Activated CD4-positive, alpha-beta T cell treated with anti-CD3 and anti-CD28 coated beads for 36 hours (primary cell): ENCODE measurements at regions of chr7 and their contacts with region 1.

Region 1: DNA sequence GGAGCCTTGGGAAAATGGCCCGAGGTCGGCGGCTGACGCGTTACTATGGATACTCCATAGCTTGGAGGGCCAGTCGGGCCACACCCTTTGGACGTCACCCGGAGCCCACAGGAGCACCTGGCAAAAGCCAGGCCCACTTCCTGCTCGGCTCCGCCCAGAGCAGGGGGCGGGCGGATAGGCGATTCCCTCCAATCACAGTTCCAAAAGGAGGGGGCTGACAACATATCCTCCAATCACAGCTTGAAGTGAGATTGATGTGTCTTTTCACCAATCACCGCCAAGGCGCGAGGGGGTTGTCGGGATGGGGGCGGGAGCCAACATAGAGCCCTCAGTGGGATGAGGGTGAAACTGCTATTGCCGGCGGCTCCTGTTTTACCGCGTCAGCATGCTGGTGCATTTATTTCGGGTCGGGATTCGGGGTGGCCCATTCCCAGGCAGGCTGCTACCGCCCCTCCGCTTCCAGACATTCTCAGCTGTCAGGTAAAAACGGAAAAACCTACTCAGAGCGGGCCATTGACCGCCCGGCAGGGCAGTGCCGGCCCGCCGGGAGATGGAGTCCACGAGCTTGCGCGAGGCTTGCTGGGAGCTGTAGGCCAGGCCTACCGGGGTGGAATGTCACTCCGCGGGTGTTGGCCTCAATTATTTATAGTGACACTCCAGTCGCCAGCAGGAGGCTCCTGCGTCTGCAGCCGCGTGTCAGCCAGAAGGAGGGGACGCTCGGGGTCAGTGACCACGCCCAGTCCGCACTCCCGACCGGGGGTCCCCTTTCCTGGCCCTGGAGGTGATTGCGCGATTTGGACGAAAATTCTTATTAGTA is at the start of gene ABCB8:
- DNase-seq: peak; percentile 99
- ATAC-seq: peak; percentile 95
- H3K4me3 Mint-ChIP-seq: peak within 1 kb of the TSS; percentile 97
- H3K27ac Mint-ChIP-seq: peak within 1 kb of the TSS; percentile 95
- H3K4me1 Mint-ChIP-seq: peaks cover 23% of the 10 kb centered on the region
- H3K27me3 Mint-ChIP-seq: no peaks in the 10 kb centered on the region
- total RNA-seq, gene ABCB8: 41.9 to 44.5 TPM

Region 2: GRCh38 chr7:151008511-151009323 is 19.6 kb before region 1 on chr7:
- CTCF ChIA-PET with region 1: interaction called, 13 read pairs
- POLR2A ChIA-PET with region 1: interaction called, 6 read pairs
- intact Hi-C with region 1: loop called in 1 of 2 experiments (anchors 1 kb)
- DNase-seq: peak; percentile 89
- ATAC-seq: peak; percentile 67
- H3K4me3 Mint-ChIP-seq: peak overlapping the region; percentile 55
- H3K27ac Mint-ChIP-seq: peak overlapping the region; percentile 59
- H3K4me1 Mint-ChIP-seq: peaks cover 53% of the 10 kb centered on the region
- H3K27me3 Mint-ChIP-seq: no peaks in the 10 kb centered on the region

Region 3: DNA sequence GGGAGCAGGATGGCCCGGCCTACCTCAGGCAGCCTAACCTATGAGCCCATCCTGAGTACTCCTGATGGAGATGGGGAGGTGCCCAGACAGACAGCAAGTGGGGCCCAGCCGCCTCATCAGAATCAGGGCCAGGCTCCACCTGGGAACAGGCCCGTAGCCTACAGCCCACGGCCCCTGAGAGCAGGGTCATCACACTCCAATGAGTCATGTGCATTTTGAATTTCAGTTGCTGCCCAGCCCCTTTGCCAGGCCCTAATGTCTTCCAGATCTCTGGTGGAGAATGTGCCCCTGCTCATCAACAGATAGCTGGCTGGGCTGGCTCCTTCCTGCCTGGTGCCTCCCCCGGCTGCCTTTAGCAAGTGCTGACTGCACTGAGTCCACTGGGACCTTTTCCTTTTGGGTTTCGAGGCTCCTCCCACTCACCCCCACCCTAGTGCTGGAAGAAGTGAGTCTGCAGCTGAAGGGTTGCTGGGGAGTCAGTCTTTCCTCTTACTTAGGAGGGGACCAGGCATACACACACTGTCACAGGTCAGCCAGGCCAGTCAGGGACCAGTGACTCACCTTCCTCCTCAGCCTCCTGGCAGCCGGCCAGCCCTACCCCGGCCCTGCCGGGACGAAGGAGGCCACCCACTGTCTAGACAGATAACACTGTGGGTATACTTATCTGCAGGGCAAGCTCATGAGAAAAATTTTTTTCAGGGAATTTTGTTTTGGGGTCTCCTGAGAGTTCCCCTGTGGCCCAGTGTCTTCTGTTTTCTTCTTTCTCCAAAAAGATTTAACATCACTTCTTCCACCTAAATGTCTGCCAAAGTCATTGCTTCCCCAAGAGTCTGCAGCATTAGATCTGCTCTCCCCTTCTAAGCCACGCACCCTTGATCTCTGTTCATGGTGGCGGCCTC is 10.9 kb after region 1 on chr7:
- CTCF ChIA-PET with region 1: interaction called, 4 read pairs
- POLR2A ChIA-PET with region 1: no interaction called
- intact Hi-C with region 1: loop called in 1 of 2 experiments (anchors 1 kb)
- DNase-seq: peak; percentile 88
- ATAC-seq: peak; percentile 94
- H3K4me3 Mint-ChIP-seq: peak overlapping the region; percentile 10
- H3K27ac Mint-ChIP-seq: peak overlapping the region; percentile 85
- H3K4me1 Mint-ChIP-seq: peaks cover 17% of the 10 kb centered on the region
- H3K27me3 Mint-ChIP-seq: no peaks in the 10 kb centered on the region

Region 4: DNA sequence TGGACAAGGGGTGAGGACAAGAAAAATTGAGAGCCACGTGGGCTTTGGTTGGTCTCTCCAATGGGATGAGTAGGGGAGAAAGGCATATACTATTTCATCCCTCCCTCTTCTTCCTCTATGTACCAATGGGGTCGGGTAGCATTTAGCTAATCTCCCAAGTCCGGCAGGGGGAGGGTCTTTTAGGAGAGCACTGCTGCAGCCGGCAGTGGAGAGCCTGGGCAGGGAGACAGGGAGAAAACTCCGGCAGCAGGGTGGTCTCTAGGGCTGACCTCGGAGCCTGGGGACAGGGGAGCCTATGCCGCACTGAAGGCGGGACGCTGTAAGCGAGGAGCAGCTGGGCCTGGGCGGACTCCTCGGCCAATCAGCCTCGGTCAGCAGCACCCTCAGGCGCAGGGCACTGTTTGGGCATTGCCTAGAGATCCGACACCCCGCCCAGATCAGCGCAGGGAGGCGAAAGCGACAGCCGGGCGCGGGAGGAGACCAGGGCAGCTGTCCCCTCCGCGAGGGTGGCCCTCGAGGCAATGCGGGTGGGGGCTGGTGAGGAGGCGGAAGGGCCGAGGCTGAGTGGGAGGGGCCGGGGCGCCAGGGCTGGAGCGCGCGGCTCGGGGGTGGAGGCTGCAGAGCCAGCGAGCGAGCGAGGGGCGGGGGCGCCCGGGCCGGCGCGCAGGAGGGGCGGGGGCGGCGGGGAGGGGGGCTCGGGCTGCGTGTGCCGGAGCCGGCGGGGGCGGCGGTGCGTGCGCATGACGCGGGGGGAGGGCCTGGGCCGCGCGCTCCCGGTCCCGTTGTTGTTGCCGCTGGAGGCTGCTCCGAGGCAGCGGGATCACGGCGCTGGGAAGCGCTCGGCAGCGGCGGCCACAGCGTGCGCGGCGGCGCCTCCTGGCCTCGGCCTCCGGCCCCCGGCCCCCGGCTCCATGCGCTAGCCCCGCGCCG is 57.6 kb after region 1 on chr7 and contains the start of gene AGAP3:
- CTCF ChIA-PET with region 1: interaction called, 4 read pairs
- POLR2A ChIA-PET with region 1: no interaction called
- intact Hi-C with region 1: loop called in 1 of 2 experiments (anchors 1 kb)
- DNase-seq: peak; percentile 73
- ATAC-seq: peak; percentile 8
- H3K4me3 Mint-ChIP-seq: peak within 1 kb of the TSS; percentile 81
- H3K27ac Mint-ChIP-seq: peak within 1 kb of the TSS; percentile 84
- H3K4me1 Mint-ChIP-seq: peaks cover 43% of the 10 kb centered on the region
- H3K27me3 Mint-ChIP-seq: peaks cover 7% of the 10 kb centered on the region
- total RNA-seq, gene AGAP3: 29.4 to 33.2 TPM

Region 5: GRCh38 chr7:151152643-151153513 is 124.5 kb after region 1 on chr7:
- CTCF ChIA-PET with region 1: no interaction called
- POLR2A ChIA-PET with region 1: no interaction called
- intact Hi-C with region 1: no loop called
- DNase-seq: no peak
- ATAC-seq: no peak
- H3K4me3 Mint-ChIP-seq: no peak overlapping the region
- H3K27ac Mint-ChIP-seq: no peak overlapping the region
- H3K4me1 Mint-ChIP-seq: no peaks in the 10 kb centered on the region
- H3K27me3 Mint-ChIP-seq: peaks cover 26% of the 10 kb centered on the region

Region 6: DNA sequence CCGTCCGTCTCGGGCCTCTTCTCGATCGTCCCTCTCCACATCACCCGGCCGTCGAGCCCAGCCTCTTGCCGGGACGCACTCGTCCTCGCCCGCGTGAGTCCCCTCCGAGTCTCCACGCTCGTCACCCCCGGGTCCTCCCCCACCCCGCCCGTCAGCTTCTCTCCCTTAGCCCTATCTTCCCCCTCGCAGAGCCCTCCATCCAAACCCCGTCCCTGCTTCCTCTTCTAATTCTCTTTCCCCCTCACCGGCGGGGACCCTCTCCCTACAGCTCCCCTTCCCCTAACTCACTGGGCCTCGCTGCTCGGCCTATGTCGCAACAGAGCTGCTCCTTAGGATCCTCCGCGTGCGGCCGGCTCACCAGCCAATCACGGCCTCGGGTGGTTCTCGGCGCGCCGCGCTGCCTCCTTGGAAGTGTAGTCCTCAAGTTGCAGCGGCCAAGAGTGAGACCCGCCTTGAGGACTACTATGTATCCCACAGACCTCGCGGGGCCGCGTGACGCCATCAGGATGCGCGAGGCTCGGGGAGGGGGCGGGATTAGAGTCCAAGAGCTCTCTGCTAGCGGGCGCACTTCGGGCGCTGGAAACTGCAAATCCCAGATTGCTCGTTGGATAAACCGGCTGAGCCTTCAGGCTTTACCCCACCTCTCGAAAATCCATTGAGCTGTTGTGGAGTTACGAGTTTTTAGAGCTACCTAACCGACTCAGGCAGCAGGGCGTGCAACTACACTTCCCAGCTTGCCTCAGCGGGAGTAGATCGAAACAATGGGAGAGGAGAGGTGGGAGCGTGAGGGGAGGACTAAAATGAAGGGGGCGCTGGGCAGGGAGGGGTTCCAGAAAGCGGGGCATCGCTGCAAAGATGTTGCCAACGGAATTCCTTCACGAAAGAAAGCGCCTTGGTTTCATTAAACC is 198.8 kb after region 1 on chr7 and contains the start of gene ABCF2:
- CTCF ChIA-PET with region 1: interaction called, 3 read pairs
- POLR2A ChIA-PET with region 1: no interaction called
- intact Hi-C with region 1: loop called in 1 of 2 experiments (anchors 1 kb)
- DNase-seq: peak; percentile 99
- ATAC-seq: peak; percentile 100
- H3K4me3 Mint-ChIP-seq: peak within 1 kb of the TSS; percentile 92
- H3K27ac Mint-ChIP-seq: peak within 1 kb of the TSS; percentile 92
- H3K4me1 Mint-ChIP-seq: peaks cover 40% of the 10 kb centered on the region
- H3K27me3 Mint-ChIP-seq: no peaks in the 10 kb centered on the region
- total RNA-seq, gene ABCF2: 48.4 to 49.0 TPM